ENCODE measurements at regions of chr12 and their contacts with region 1.

Region 1: DNA sequence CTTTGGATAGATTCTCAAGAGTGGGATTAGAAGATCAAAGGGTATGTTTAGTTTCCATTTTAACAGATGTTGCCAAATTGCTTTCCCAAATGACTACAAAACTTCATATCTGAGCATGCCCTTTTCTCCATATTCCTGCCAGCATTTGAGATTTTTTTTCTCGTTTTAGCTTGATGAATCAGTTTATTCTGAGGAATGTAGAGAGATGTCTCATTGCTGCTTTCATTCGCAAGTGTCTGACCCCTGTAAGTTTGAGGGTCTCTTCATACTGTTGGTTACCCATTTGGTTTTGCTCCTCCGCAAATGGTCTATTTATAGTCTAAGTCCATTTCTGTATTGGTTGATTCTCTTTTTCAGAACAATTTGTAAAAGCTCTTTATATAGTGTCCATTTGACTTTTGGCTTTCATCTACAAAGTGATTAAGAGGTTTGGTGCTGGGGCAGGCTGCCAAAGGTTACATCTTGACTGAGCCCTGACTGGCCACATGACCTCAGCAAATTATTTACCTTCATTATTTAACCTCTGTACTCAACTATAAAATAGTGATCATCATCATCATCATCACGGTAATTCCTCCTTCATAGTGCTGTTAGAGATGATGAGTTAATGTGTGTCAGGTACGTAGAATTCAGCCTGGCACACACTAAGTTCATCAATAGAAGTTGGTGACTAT is 33.6 kb downstream of the HCAR2 start:
- DNase-seq: no peak
- H3K4me3 ChIP-seq: no peak overlapping the region
- H3K27ac ChIP-seq: no peak overlapping the region
- H3K4me1 ChIP-seq: no peaks in the 10 kb centered on the region
- H3K27me3 ChIP-seq: no peaks in the 10 kb centered on the region
- CTCF ChIP-seq: no peak
- POLR2A ChIP-seq: no peak

Region 2: GRCh38 chr12:121159467-121160307 is 1509.8 kb before region 1 on chr12:
- intact Hi-C with region 1: no loop called
- DNase-seq: no peak
- H3K4me3 ChIP-seq: no peak overlapping the region
- H3K27ac ChIP-seq: no peak overlapping the region
- H3K4me1 ChIP-seq: no peaks in the 10 kb centered on the region
- H3K27me3 ChIP-seq: no peaks in the 10 kb centered on the region
- CTCF ChIP-seq: no peak
- POLR2A ChIP-seq: no peak

Region 3: DNA sequence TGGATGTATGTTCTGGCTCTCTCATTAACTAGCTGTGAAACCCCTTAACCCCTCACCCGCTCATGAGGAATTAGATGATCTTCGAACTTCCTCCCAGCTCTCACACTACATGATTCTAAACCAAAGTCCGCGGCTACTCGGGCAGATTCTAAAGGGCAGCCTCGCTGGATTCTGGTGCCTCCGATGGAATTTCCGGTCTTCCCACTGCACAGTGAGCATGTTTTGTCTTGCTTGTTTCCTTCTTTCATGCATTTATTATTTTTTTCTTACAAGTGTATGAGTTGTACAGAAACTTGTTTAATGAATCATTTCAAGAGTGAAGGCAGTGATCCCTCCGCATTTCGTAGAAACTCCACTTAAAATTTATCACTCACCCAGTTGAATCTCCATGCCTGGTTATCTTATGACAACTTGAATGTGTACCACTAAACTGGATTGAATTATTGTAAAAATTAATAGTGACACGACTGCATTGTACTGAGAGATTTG is 51.6 kb after region 1 on chr12:
- intact Hi-C with region 1: loop called (anchors 2 kb)
- DNase-seq: peak in 1 of 2 donors; percentile 58
- H3K4me3 ChIP-seq: no peak overlapping the region
- H3K27ac ChIP-seq: peak overlapping the region; percentile 84
- H3K4me1 ChIP-seq: no peaks in the 10 kb centered on the region
- H3K27me3 ChIP-seq: no peaks in the 10 kb centered on the region
- CTCF ChIP-seq: no peak
- POLR2A ChIP-seq: no peak

Measured in breast epithelium (tissue), 4 donors.